ENCODE measurements at regions of chr2 and their contacts with region 1.

Region 1: GRCh38 chr2:239308661-239309397 is 92.0 kb downstream of the HDAC4 start:
- DNase-seq: peak; percentile 90
- H3K4me3 ChIP-seq: peak overlapping the region; percentile 48 to 62 (median 54)
- H3K27ac ChIP-seq: peak overlapping the region; percentile 93 to 97 (median 96)
- H3K4me1 ChIP-seq: peaks cover 4 to 93% (median 88%) of the 10 kb centered on the region in 4 donors
- H3K27me3 ChIP-seq: no peaks in the 10 kb centered on the region
- CTCF ChIP-seq: no peak
- EP300 ChIP-seq: peak in 3 of 4 donors; percentile 62 to 78 (median 78)
- POLR2A ChIP-seq: peak; percentile 56 to 63

Region 2: GRCh38 chr2:239114119-239114581 is 194.7 kb before region 1 on chr2:
- intact Hi-C with region 1: loop called (anchors 5 kb)
- DNase-seq: no peak
- H3K4me3 ChIP-seq: no peak overlapping the region
- H3K27ac ChIP-seq: peak overlapping the region; percentile 80 to 96 (median 88)
- H3K4me1 ChIP-seq: peaks cover 0 to 82% (median 55%) of the 10 kb centered on the region in 4 donors
- H3K27me3 ChIP-seq: no peaks in the 10 kb centered on the region
- CTCF ChIP-seq: no peak
- EP300 ChIP-seq: no peak
- POLR2A ChIP-seq: no peak

Region 3: DNA sequence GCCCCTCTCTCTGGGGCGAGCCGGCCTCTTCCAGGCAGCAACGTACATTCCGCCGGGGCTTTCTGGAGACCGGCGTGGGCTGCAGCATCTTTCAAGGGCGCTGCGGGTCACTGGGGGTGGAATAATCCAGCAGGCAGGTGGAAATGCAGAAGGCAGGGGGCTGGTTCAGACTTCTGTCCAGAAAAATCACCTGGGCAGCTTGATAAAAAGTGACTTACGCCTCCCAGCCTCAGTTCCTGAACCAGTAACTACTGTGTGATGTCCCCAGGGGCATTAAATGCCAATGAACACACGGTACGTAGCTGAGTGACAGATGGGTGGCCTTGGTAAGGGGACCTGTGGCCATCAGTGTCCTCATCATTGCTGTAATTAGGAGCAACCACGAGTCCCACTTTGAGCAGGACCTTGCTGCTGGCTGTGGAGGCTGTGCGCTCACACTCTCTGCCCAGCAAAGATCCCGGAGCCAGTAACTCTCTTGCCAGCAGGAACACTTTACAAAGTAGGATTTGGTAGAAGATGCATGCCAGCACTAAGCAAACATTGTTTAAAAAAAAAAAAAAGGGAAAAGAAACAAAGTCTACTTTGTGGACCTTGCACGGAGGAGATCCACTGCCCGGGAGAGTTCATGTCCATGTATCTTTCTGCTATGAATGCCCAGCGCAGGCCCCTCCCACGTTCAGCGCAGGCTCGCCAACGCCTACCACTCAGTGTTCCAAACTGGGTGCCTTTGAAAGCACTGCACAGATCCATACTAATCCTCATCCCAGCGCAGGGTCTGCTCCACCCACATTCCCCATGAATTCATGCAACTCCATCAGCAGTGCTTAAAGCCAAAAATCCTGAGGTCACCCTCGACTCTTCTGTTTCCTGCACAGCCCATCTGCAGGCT is 85.3 kb before region 1 on chr2:
- intact Hi-C with region 1: loop called (anchors 5 kb)
- DNase-seq: peak; percentile 83
- H3K4me3 ChIP-seq: peak overlapping the region in 1 of 4 donors; percentile 12
- H3K27ac ChIP-seq: peak overlapping the region; percentile 80 to 91 (median 86)
- H3K4me1 ChIP-seq: peaks cover 0 to 88% (median 87%) of the 10 kb centered on the region in 4 donors
- H3K27me3 ChIP-seq: no peaks in the 10 kb centered on the region
- CTCF ChIP-seq: no peak
- EP300 ChIP-seq: no peak
- POLR2A ChIP-seq: no peak

Region 4: GRCh38 chr2:239326831-239327535 is 18.2 kb after region 1 on chr2:
- intact Hi-C with region 1: loop called (anchors 2 kb)
- DNase-seq: peak; percentile 68
- H3K4me3 ChIP-seq: no peak overlapping the region
- H3K27ac ChIP-seq: peak overlapping the region; percentile 92 to 97 (median 96)
- H3K4me1 ChIP-seq: peaks cover 0 to 100% (median 91%) of the 10 kb centered on the region in 4 donors
- H3K27me3 ChIP-seq: no peaks in the 10 kb centered on the region
- CTCF ChIP-seq: no peak
- EP300 ChIP-seq: no peak
- POLR2A ChIP-seq: no peak

Region 5: GRCh38 chr2:239348563-239349447 is 40.0 kb after region 1 on chr2:
- intact Hi-C with region 1: loop called (anchors 2 kb)
- DNase-seq: peak; percentile 95
- H3K4me3 ChIP-seq: peak overlapping the region; percentile 31 to 55 (median 40)
- H3K27ac ChIP-seq: peak overlapping the region; percentile 81 to 97 (median 96)
- H3K4me1 ChIP-seq: peaks cover 0 to 72% (median 60%) of the 10 kb centered on the region in 4 donors
- H3K27me3 ChIP-seq: no peaks in the 10 kb centered on the region
- CTCF ChIP-seq: no peak
- EP300 ChIP-seq: peak; percentile 97 to 100 (median 99)
- POLR2A ChIP-seq: peak; percentile 49 to 50

Region 6: GRCh38 chr2:239420077-239420476 is 111.2 kb after region 1 on chr2:
- intact Hi-C with region 1: no loop called
- DNase-seq: no peak
- H3K4me3 ChIP-seq: no peak overlapping the region
- H3K27ac ChIP-seq: no peak overlapping the region
- H3K4me1 ChIP-seq: no peaks in the 10 kb centered on the region
- H3K27me3 ChIP-seq: no peaks in the 10 kb centered on the region
- CTCF ChIP-seq: no peak
- EP300 ChIP-seq: no peak
- POLR2A ChIP-seq: no peak

Region 7: DNA sequence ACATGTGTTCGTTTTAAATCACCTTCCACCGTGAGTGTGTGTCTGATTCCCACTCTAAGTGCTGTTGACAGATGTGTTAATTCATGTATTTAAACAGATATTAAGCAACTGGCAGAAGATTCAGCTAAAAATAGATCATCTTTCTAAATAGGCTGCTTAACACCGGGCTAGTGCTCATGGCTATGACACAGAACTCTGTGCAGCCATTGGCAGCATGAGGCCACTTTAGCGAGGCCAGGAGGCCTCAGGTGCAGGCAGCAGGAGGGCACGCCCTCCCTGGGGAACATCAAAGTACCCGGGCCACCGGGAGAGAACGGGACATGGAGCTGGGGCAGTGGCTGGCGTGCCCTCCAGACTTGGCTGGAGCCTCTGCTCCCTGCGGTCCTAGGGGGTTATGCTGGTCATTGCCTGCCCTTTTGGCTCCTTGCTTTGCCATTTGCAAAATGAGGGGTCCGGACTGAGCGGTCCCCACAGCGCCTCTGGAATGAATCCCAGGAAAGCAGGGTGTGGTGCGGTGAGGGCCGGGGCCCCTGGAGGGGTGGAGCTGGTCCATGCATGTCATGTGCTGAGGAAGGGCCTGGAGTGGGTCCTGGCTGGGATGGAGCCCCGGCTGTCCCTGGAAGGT is 154.8 kb after region 1 on chr2:
- intact Hi-C with region 1: no loop called
- DNase-seq: peak; percentile 65
- H3K4me3 ChIP-seq: no peak overlapping the region
- H3K27ac ChIP-seq: peak overlapping the region in 1 of 4 donors; percentile 4
- H3K4me1 ChIP-seq: peaks cover 0 to 23% (median 16%) of the 10 kb centered on the region in 4 donors
- H3K27me3 ChIP-seq: no peaks in the 10 kb centered on the region
- CTCF ChIP-seq: no peak
- EP300 ChIP-seq: no peak
- POLR2A ChIP-seq: no peak

Measured in sigmoid colon (tissue), 7 donors.